ENCODE measurements at regions of chr10 and their contacts with region 1.

Region 1: DNA sequence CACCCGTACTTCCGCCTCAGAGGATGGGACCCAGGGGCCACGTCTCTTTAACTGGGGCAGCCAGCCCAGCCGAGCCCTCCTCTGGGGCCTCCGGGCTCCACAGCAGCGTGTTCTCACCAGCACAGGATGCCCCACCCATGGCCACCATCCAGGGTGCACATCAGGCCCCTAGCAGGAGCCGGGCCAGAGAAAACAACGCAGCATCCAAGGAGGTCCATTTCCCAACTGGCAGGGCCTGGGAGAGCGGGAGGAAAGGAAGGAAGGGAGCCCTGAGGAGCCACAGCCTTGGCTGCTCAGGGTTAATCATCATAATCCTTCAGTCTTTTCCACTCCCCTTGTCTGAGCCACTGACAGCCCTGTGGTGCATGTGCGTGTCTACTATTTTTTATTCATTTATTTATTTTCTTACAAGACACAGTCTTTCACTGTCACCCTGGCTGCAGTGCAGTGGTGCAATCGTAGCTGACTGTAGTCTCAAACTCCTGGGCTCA is 3.6 kb downstream of the PLAC9 start:
- DNase-seq: no peak
- ATAC-seq: no peak
- H3K4me3 ChIP-seq: no peak overlapping the region
- H3K27ac ChIP-seq: no peak overlapping the region
- H3K4me1 ChIP-seq: no peaks in the 10 kb centered on the region; the same call in 1 of the 2 replicates
- H3K27me3 ChIP-seq: peaks cover 16% of the 10 kb centered on the region
- CTCF ChIP-seq: no peak

Region 2: DNA sequence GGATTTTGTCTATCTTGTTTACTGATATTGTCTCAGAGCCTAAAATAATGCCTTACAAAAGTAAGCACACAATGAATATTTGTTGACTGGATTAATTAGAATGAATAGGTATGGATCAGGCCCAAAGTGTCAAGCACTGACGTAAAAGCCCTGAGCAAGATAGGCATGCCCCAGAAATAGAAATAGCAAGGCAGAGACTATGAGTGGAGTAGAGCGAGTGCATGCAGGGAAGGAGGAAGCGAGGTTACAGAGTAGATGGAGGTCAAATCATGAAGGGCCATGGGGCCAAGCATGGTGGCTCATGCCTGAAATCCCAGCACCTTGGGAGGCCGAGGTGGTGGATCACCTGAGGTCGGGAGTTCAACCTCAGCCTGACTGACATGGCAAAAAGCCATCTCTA is 135.6 kb before region 1 on chr10:
- CTCF ChIA-PET with region 1: no interaction called
- POLR2A ChIA-PET with region 1: interaction called, 10 read pairs
- in situ Hi-C with region 1: no loop called
- intact Hi-C with region 1: no loop called
- DNase-seq: no peak
- ATAC-seq: no peak
- H3K4me3 ChIP-seq: no peak overlapping the region
- H3K27ac ChIP-seq: no peak overlapping the region
- H3K4me1 ChIP-seq: no peaks in the 10 kb centered on the region
- H3K27me3 ChIP-seq: no peaks in the 10 kb centered on the region
- CTCF ChIP-seq: no peak

Region 3: GRCh38 chr10:80064120-80064886 is 71.8 kb before region 1 on chr10:
- CTCF ChIA-PET with region 1: no interaction called
- POLR2A ChIA-PET with region 1: no interaction called
- in situ Hi-C with region 1: no loop called
- intact Hi-C with region 1: loop called (anchors 2 kb)
- DNase-seq: no peak
- ATAC-seq: no peak
- H3K4me3 ChIP-seq: no peak overlapping the region
- H3K27ac ChIP-seq: no peak overlapping the region
- H3K4me1 ChIP-seq: no peaks in the 10 kb centered on the region
- H3K27me3 ChIP-seq: no peaks in the 10 kb centered on the region
- CTCF ChIP-seq: no peak

Region 4: GRCh38 chr10:80333983-80334382 is 197.9 kb after region 1 on chr10:
- CTCF ChIA-PET with region 1: no interaction called
- POLR2A ChIA-PET with region 1: interaction called, 11 read pairs
- in situ Hi-C with region 1: no loop called
- intact Hi-C with region 1: no loop called
- DNase-seq: no peak
- ATAC-seq: no peak
- H3K4me3 ChIP-seq: no peak overlapping the region
- H3K27ac ChIP-seq: no peak overlapping the region
- H3K4me1 ChIP-seq: no peaks in the 10 kb centered on the region
- H3K27me3 ChIP-seq: peaks cover 12% of the 10 kb centered on the region
- CTCF ChIP-seq: no peak

Region 5: DNA sequence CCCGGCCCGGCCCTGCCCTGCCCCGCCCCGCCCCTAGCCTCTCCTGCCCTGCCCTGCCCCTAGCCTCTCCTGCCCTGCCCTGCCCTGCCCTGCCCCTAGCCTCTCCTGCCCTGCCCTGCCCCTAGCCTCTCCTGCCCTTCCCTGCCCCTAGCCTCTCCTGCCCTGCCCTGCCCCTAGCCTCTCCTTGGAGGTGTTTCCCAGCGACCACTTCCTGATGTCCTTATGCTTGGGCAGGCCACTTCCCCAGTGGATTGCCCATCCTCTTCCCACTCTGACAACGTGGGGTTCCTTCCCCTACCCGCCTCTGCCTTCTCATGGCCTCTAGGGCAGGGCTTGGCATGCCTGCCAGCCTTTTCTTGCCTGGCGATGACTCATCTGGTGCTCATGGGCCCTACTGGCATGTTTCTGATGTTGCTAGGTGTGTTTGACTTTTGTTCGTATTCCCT is 293.4 kb after region 1 on chr10:
- CTCF ChIA-PET with region 1: no interaction called
- POLR2A ChIA-PET with region 1: interaction called, 11 read pairs
- in situ Hi-C with region 1: no loop called
- intact Hi-C with region 1: no loop called
- DNase-seq: no peak
- ATAC-seq: peak; percentile 86; the same call in 1 of the 2 replicates
- H3K4me3 ChIP-seq: no peak overlapping the region
- H3K27ac ChIP-seq: no peak overlapping the region
- H3K4me1 ChIP-seq: no peaks in the 10 kb centered on the region
- H3K27me3 ChIP-seq: no peaks in the 10 kb centered on the region
- CTCF ChIP-seq: no peak

Measured in Panc1 (cell line).